RWPE1 (cell line): ENCODE measurements at regions of chr19 and their contacts with region 1.

Region 1: DNA sequence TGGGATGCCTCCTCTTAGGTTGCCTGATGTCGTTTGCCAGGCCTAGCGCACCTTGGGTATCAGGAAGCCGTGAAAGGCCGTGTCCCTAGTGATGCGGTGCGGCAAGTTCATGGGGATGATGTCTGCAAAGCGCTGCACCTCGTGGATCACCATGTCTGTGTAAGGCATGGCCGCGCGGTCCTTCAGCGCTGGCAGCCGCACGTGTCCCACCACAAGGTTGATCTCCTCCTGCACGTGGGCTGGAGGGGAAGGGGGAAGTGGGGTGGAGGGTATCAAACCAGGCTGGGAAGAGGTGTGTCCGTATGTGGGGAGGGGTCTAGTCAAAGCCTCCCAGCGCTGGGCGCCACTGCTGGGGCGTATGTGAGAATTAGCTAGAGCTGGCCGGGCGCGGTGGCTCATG is 23.2 kb downstream of the EGLN2 start:
- DNase-seq: no peak
- H3K27ac ChIP-seq: no peak overlapping the region
- CTCF ChIP-seq: no peak

Region 2: GRCh38 chr19:40662921-40663694 is 159.1 kb before region 1 on chr19:
- CTCF ChIA-PET with region 1: interaction called, 11 read pairs
- POLR2A ChIA-PET with region 1: no interaction called
- DNase-seq: peak; percentile 77
- H3K27ac ChIP-seq: peak overlapping the region; percentile 66
- CTCF ChIP-seq: peak; percentile 96